Heart left ventricle (tissue), 16 donors: ENCODE measurements at regions of chr16 and their contacts with region 1.

Region 1: DNA sequence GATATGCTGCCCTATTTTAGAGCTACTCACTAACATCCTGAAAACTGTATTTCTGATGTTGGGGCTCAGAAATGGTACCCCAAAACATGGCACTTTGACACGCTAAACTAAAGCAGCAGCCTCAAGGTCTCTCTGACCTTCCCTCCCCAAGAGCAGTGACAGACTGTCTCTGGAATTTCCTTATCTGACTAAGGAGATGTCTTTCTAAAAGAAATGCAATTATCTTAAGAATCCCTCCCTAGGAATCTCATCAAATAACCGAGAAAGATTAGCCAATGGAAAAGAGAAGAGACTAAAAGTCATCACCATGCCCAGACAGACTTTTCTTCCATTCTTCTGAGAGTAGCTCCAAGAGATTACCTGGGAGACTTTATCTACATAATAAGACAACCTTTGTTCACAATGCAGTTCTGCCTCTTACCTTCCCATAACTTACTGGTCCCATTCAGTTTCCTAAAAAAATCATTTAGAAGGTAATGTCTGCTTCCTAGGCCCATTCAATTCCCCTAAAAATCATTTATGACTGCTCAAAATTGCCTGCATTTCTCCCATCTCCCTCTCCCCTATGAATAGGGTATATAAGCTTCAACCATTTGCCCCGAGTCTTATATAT is 123.9 kb downstream of the CPPED1 start:
- DNase-seq: no peak
- ATAC-seq: no peak
- H3K4me3 ChIP-seq: no peak overlapping the region
- H3K27ac ChIP-seq: no peak overlapping the region
- H3K4me1 ChIP-seq: peaks cover 0 to 3% (median 0%) of the 10 kb centered on the region in 12 donors
- H3K27me3 ChIP-seq: no peaks in the 10 kb centered on the region
- CTCF ChIP-seq: no peak
- POLR2A ChIP-seq: no peak

Region 2: GRCh38 chr16:12716658-12717057 is 36.9 kb after region 1 on chr16:
- intact Hi-C with region 1: loop called in 1 of 10 experiments (anchors 2 kb)
- DNase-seq: no peak
- ATAC-seq: no peak
- H3K4me3 ChIP-seq: no peak overlapping the region
- H3K27ac ChIP-seq: no peak overlapping the region
- H3K4me1 ChIP-seq: no peaks in the 10 kb centered on the region
- H3K27me3 ChIP-seq: no peaks in the 10 kb centered on the region
- CTCF ChIP-seq: no peak
- POLR2A ChIP-seq: no peak